ENCODE measurements at regions of chr10 and their contacts with region 1.

Region 1: DNA sequence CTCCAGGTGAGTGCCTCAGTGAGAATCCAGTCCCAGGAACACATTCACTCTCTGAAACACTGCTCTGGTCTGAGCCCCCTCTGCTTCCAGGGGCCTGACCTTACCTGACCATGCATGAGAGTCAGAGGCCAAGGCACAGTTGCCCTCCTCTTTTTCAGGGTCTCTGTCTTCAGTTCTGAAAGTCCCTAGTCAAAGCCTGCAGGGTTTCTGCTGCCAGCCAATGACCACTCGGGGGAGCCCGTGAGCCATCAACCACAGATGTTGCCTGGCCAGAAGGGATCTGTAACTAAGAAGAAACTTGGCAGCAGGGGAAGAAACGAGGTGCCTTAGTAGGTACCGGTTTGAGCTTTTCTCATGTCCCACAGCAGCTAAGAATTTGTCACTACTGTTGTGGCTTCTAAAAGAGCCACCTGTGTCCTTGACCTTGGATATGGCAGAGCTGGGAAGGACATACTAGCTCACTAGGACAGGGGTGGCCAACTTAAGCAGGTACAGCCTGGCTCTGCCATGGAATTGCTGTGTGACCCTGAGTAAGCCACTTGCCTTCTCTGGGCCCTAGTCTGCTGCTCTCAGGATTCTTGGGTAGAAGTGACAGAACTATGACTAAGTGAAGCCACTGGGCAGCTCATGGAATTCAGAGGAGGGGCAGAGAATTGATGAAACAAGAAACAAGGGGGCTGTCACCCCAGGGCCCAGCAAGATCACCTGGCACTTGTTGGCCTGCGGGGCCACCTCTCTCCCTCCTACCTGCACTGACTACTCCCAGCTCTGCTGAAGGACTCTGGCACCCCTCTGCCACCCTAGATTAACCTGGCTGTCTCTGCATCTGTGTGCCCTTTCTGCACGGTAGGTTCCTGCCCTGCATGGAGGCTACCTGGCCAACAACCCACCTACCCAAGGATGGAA is 83.8 kb upstream of the GPR26 start:
- DNase-seq: peak; percentile 80
- ATAC-seq: peak; percentile 56
- H3K4me3 Mint-ChIP-seq: no peak overlapping the region
- H3K27ac Mint-ChIP-seq: no peak overlapping the region
- H3K4me1 Mint-ChIP-seq: no peaks in the 10 kb centered on the region
- H3K27me3 Mint-ChIP-seq: peaks cover 36% of the 10 kb centered on the region
- CTCF ChIP-seq: peak; percentile 58

Region 2: GRCh38 chr10:123595661-123596060 is 13.3 kb after region 1 on chr10:
- CTCF ChIA-PET with region 1: interaction called, 12 read pairs
- POLR2A ChIA-PET with region 1: no interaction called
- intact Hi-C with region 1: no loop called
- DNase-seq: no peak
- ATAC-seq: no peak
- H3K4me3 Mint-ChIP-seq: no peak overlapping the region
- H3K27ac Mint-ChIP-seq: no peak overlapping the region
- H3K4me1 Mint-ChIP-seq: no peaks in the 10 kb centered on the region
- H3K27me3 Mint-ChIP-seq: peaks cover 9% of the 10 kb centered on the region
- CTCF ChIP-seq: no peak

Region 3: DNA sequence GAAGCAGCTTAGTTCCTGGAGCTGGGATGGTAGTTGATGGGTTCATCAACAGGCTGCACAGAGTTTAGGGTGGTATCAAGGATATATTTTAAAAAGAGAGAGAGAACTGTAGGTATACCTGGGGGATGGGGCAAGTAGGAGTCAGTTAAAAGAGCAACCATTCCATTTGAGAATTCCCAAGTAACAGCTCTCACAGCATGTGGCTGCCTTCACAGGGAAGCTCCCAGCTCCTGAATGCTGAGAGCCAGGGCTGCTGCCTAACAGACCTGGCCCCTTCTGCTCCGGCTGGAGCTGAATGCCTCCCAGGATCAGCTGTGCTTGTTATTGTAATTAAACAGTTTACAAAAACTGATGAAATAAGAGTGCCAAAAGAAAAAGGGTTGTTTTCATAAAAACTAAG is 25.0 kb after region 1 on chr10:
- CTCF ChIA-PET with region 1: no interaction called
- POLR2A ChIA-PET with region 1: no interaction called
- intact Hi-C with region 1: no loop called
- DNase-seq: no peak
- ATAC-seq: no peak
- H3K4me3 Mint-ChIP-seq: no peak overlapping the region
- H3K27ac Mint-ChIP-seq: no peak overlapping the region
- H3K4me1 Mint-ChIP-seq: no peaks in the 10 kb centered on the region
- H3K27me3 Mint-ChIP-seq: peaks cover 11% of the 10 kb centered on the region
- CTCF ChIP-seq: no peak

Region 4: DNA sequence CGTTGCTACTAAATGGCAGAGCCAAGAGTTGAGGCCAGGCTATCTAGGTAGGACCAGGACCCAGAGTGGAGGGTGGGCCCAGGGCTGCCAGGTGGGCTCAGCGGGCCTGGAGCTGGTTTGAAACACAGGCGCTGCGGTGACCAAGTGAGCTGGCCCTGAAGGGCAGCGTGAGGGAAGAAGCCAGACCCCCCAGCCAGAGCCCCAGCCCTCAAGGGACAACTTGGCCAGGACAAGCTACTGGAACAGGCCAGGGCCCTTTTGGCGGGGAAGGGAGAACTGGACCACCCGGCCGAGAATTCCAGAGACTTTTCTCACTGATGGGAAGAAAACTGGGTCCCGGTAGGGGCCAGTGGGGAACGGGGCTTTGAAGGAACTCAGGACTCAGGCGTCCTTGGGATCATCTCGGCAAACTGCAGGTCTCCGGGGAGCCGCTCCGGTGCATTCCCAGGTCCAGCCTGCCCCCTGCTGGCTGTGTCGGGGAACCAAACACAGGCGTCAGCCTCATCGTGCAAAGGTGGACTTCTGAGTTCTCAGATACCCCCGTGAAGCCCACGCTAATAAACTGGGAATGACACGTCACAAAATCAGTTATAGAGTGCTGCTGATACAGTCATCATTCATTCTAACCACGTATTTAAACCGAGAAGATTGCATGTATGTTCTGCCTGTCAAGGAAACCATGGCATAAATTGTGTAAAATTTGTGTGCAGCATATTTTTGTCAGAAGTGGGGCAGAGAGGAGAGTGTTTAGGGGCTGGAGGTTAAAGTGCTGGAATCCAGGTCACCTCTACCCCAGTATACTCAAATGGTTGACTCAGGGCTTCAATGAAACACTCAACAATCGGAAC is 385.3 kb after region 1 on chr10:
- CTCF ChIA-PET with region 1: interaction called, 11 read pairs
- POLR2A ChIA-PET with region 1: no interaction called
- intact Hi-C with region 1: loop called (anchors 2 kb)
- DNase-seq: peak; percentile 71
- ATAC-seq: peak; percentile 56
- H3K4me3 Mint-ChIP-seq: no peak overlapping the region
- H3K27ac Mint-ChIP-seq: no peak overlapping the region
- H3K4me1 Mint-ChIP-seq: peaks cover 2% of the 10 kb centered on the region
- H3K27me3 Mint-ChIP-seq: peaks cover 51% of the 10 kb centered on the region
- CTCF ChIP-seq: peak; percentile 82

Measured in activated CD8-positive, alpha-beta T cell treated with anti-CD3 and anti-CD28 coated beads for 36 hours (primary cell).